HepG2 (cell line): ENCODE measurements at regions of chr5 and their contacts with region 1.

Region 1: GRCh38 chr5:145237843-145238242 is 597.3 kb downstream of the PRELID2 start:
- DNase-seq: peak; percentile 50
- ATAC-seq: peak; percentile 88
- H3K4me3 ChIP-seq: no peak overlapping the region
- H3K27ac ChIP-seq: no peak overlapping the region
- H3K4me1 ChIP-seq: no peaks in the 10 kb centered on the region
- H3K27me3 ChIP-seq: no peaks in the 10 kb centered on the region
- CTCF ChIP-seq: peak; percentile 76
- EP300 ChIP-seq: no peak
- POLR2A ChIP-seq: no peak
- RAD21 ChIP-seq: peak; percentile 38; the same call in 1 of the 2 replicates

Region 2: GRCh38 chr5:144333336-144333920 is 904.4 kb before region 1 on chr5:
- CTCF ChIA-PET with region 1: no interaction called
- POLR2A ChIA-PET with region 1: no interaction called
- in situ Hi-C with region 1: no loop called
- intact Hi-C with region 1: loop called (anchors 10 kb)
- DNase-seq: no peak
- ATAC-seq: no peak
- H3K4me3 ChIP-seq: no peak overlapping the region
- H3K27ac ChIP-seq: no peak overlapping the region
- H3K4me1 ChIP-seq: no peaks in the 10 kb centered on the region
- H3K27me3 ChIP-seq: no peaks in the 10 kb centered on the region
- CTCF ChIP-seq: no peak
- EP300 ChIP-seq: no peak
- POLR2A ChIP-seq: no peak
- RAD21 ChIP-seq: no peak

Region 3: GRCh38 chr5:144467792-144468191 is 770.1 kb before region 1 on chr5:
- CTCF ChIA-PET with region 1: no interaction called
- POLR2A ChIA-PET with region 1: no interaction called
- in situ Hi-C with region 1: no loop called
- intact Hi-C with region 1: loop called (anchors 5 kb)
- DNase-seq: peak; percentile 35
- ATAC-seq: peak; percentile 95
- H3K4me3 ChIP-seq: no peak overlapping the region
- H3K27ac ChIP-seq: no peak overlapping the region
- H3K4me1 ChIP-seq: no peaks in the 10 kb centered on the region
- H3K27me3 ChIP-seq: no peaks in the 10 kb centered on the region
- CTCF ChIP-seq: peak; percentile 70
- EP300 ChIP-seq: no peak
- POLR2A ChIP-seq: no peak
- RAD21 ChIP-seq: 0 out of 2 replicates have a peak, but pooled peaks have one; percentile 15

Region 4: GRCh38 chr5:145189746-145190145 is 48.1 kb before region 1 on chr5:
- CTCF ChIA-PET with region 1: no interaction called
- POLR2A ChIA-PET with region 1: no interaction called
- in situ Hi-C with region 1: no loop called
- intact Hi-C with region 1: no loop called
- DNase-seq: no peak
- ATAC-seq: no peak
- H3K4me3 ChIP-seq: no peak overlapping the region
- H3K27ac ChIP-seq: no peak overlapping the region
- H3K4me1 ChIP-seq: no peaks in the 10 kb centered on the region
- H3K27me3 ChIP-seq: no peaks in the 10 kb centered on the region
- CTCF ChIP-seq: no peak
- EP300 ChIP-seq: no peak
- POLR2A ChIP-seq: no peak
- RAD21 ChIP-seq: no peak